Breast epithelium (tissue), 4 donors: ENCODE measurements at regions of chr9 and their contacts with region 1.

Region 1: DNA sequence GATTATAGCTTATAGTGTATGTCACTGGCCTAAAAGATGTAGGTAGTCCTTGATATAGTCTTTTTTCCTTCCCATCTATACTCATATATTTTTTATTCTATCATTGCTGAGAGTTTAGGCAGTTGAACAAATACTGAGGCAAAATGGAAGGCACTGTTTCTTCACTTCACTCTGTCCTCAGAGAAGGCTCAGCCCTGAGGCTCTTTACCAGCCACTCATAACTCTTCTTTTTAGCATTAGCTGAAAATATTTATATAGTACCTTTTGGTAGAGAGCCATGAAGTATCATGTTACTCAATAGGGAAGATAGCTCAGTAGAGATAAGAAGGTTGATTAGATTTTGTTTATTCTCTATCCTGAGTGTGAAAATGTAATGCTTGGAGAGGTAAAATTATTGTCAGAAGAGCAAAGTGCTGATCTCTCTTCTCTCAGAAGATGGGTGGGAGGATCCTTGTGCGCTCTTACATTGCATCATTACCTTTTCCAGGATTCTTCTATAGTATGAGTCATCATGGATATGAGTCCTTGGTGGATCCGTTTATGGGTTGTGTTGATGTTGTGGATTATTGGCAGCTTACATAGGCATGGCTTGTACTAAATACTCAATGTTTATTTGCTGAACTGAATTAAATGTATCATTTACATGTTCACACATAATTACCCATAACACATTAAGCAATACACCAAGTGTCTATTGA is 88.1 kb downstream of the ANXA1 start:
- DNase-seq: no peak
- H3K4me3 ChIP-seq: no peak overlapping the region
- H3K27ac ChIP-seq: no peak overlapping the region
- H3K4me1 ChIP-seq: no peaks in the 10 kb centered on the region
- H3K27me3 ChIP-seq: no peaks in the 10 kb centered on the region
- CTCF ChIP-seq: no peak
- POLR2A ChIP-seq: no peak

Region 2: DNA sequence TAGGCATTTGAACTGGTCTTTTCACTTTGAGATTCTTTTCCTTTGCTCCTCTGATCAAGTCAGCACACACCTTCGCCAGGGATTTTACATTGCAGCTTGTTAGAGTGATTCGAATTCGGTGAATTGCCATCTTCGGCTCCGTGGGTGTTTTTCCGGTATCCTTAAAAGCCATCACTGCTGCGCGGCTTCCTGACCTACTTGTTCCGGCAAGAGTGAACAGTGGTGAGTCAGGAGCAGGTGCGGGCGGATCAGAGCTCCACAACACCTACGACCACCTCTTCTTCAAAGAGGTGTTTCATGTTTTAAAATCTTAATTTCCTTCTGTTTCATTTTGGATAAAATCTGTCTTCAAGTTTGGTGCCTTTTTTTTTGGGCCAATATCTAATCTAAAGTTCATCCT is 583.7 kb before region 1 on chr9:
- intact Hi-C with region 1: loop called (anchors 5 kb)
- DNase-seq: no peak
- H3K4me3 ChIP-seq: no peak overlapping the region
- H3K27ac ChIP-seq: no peak overlapping the region
- H3K4me1 ChIP-seq: no peaks in the 10 kb centered on the region
- H3K27me3 ChIP-seq: no peaks in the 10 kb centered on the region
- CTCF ChIP-seq: no peak
- POLR2A ChIP-seq: no peak

Region 3: GRCh38 chr9:74125941-74126340 is 886.2 kb after region 1 on chr9:
- intact Hi-C with region 1: no loop called
- DNase-seq: no peak
- H3K4me3 ChIP-seq: no peak overlapping the region
- H3K27ac ChIP-seq: no peak overlapping the region
- H3K4me1 ChIP-seq: no peaks in the 10 kb centered on the region
- H3K27me3 ChIP-seq: no peaks in the 10 kb centered on the region
- CTCF ChIP-seq: no peak
- POLR2A ChIP-seq: no peak

Region 4: GRCh38 chr9:75138260-75139040 is 1898.7 kb after region 1 on chr9:
- intact Hi-C with region 1: no loop called
- DNase-seq: no peak
- H3K4me3 ChIP-seq: no peak overlapping the region
- H3K27ac ChIP-seq: no peak overlapping the region
- H3K4me1 ChIP-seq: no peaks in the 10 kb centered on the region
- H3K27me3 ChIP-seq: no peaks in the 10 kb centered on the region
- CTCF ChIP-seq: no peak
- POLR2A ChIP-seq: no peak